AG04449 (cell line): ENCODE measurements at regions of chr4 and their contacts with region 1.

Region 1: DNA sequence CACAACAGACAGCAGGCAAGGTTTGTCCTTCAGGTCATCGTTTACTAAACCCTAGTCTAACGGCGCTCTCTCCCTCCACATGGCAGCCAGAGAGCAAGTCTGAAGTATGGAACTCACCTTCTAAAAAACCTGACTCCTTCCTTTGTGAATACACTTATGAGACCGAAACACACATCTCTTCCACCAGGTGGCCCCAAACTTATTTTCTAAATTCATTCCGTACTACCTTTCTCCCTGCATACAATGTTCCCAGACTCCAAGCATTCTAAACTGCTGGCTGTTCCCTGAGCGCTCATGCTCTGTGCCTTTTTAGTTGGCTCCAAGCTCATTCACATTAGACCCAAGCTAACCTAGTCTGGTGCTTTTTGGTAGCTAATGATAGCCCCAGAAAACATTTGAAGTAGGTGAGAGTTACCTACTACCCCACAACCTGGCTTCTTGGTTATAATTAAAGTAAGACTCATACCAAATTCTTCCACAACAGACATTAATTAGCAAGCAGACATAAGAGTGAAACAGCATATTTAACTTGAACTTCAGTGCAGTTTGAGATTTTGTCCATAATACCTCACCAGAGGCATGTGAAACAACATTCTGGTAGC is 67.6 kb upstream of the DCLK2 start:
- DNase-seq: no peak
- H3K4me3 ChIP-seq: no peak overlapping the region
- CTCF ChIP-seq: peak; percentile 41

Region 2: GRCh38 chr4:149630079-149630478 is 380.5 kb before region 1 on chr4:
- CTCF ChIA-PET with region 1: no interaction called
- POLR2A ChIA-PET with region 1: no interaction called
- DNase-seq: no peak
- H3K4me3 ChIP-seq: no peak overlapping the region
- CTCF ChIP-seq: no peak

Region 3: GRCh38 chr4:149999485-150000074 is 11.0 kb before region 1 on chr4:
- CTCF ChIA-PET with region 1: interaction called, 10 read pairs
- POLR2A ChIA-PET with region 1: no interaction called
- DNase-seq: peak; percentile 70
- H3K4me3 ChIP-seq: no peak overlapping the region
- CTCF ChIP-seq: peak; percentile 81

Region 4: DNA sequence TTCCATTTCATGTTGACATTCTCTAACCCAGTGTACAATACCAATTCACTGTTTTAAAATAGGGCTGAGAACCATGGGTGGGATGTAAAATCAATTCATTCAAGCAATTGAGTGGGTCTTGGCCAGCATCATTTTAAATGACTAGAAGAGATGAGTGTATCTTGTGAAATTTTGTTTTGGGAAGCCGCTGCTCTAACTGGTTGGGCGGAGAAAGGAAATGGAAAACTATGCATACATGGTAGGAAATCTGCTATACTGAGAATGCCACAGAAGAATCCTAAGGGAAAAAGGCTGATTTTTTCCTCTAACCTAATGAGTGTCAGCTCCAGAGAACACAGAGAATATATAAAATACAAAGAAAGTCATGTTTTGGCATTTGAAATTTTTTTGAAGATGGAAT is 12.9 kb after region 1 on chr4:
- CTCF ChIA-PET with region 1: interaction called, 12 read pairs
- POLR2A ChIA-PET with region 1: no interaction called
- DNase-seq: no peak
- H3K4me3 ChIP-seq: no peak overlapping the region
- CTCF ChIP-seq: no peak

Region 5: GRCh38 chr4:150033901-150034300 is 23.3 kb after region 1 on chr4:
- CTCF ChIA-PET with region 1: interaction called, 19 read pairs
- POLR2A ChIA-PET with region 1: no interaction called
- DNase-seq: no peak
- H3K4me3 ChIP-seq: no peak overlapping the region
- CTCF ChIP-seq: no peak

Region 6: DNA sequence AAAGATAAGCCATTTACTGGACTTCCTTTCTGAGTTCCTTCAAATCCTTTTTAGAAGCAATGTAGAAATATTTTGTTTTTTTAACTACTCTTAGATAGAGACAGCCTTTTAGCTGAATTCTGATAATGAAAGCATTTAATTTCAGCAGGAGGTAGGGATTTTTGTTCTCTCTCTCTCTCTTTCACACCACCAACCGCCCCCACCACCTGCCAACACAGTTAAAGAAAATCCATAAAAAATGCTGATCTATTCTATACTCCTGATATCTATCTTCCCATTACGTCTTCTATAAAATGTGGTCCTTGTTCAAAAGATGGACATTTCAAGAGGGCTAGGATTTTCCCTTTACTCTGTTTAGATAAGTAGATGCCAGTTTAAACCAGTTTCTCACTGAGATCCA is 172.2 kb after region 1 on chr4:
- CTCF ChIA-PET with region 1: no interaction called
- POLR2A ChIA-PET with region 1: no interaction called
- DNase-seq: no peak
- H3K4me3 ChIP-seq: no peak overlapping the region
- CTCF ChIP-seq: no peak

Region 7: GRCh38 chr4:150209140-150209829 is 198.7 kb after region 1 on chr4:
- CTCF ChIA-PET with region 1: interaction called, 53 read pairs
- POLR2A ChIA-PET with region 1: no interaction called
- DNase-seq: no peak
- H3K4me3 ChIP-seq: no peak overlapping the region
- CTCF ChIP-seq: peak; percentile 60

Region 8: DNA sequence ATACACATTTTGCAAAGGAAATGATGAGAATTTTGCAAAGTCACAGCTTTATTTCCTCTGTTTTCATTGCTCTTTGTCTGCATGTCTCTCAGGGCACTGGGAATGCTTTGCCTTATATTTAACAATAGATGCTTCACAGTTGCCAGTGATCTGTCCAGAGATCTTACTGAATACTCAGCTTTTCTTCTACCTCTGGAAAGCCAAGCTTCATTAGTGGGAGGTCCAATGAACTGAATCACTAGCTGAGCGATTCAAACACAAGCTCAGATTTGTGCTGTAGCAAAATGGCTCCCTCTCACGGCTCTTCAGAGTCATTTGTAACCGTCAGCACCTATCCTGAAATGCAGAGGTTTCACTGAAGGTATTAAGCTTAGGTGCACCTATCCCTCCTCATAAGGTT is 206.6 kb after region 1 on chr4:
- CTCF ChIA-PET with region 1: interaction called, 53 read pairs
- POLR2A ChIA-PET with region 1: no interaction called
- DNase-seq: no peak
- H3K4me3 ChIP-seq: no peak overlapping the region
- CTCF ChIP-seq: peak; percentile 49